Posterior vena cava (tissue), 2 donors: ENCODE measurements at regions of chr3 and their contacts with region 1.

Region 1: GRCh38 chr3:188842639-188843038 is 329.1 kb upstream of the TPRG1 start:
- DNase-seq: no peak

Region 2: GRCh38 chr3:188825901-188826300 is 16.7 kb before region 1 on chr3:
- intact Hi-C with region 1: loop called in 1 of 2 experiments (anchors 1 kb)
- DNase-seq: no peak